Thyroid gland (tissue), 4 donors: ENCODE measurements at regions of chr1 and their contacts with region 1.

Region 1: GRCh38 chr1:78114034-78114956 is 68.5 kb downstream of the GIPC2 start:
- DNase-seq: peak; percentile 61 to 82
- H3K4me3 ChIP-seq: no peak overlapping the region
- H3K27ac ChIP-seq: peak overlapping the region; percentile 34 to 63 (median 36)
- H3K4me1 ChIP-seq: peaks cover 0 to 14% of the 10 kb centered on the region in 2 donors
- H3K27me3 ChIP-seq: no peaks in the 10 kb centered on the region
- CTCF ChIP-seq: peak; percentile 63 to 98 (median 83)
- POLR2A ChIP-seq: no peak

Region 2: DNA sequence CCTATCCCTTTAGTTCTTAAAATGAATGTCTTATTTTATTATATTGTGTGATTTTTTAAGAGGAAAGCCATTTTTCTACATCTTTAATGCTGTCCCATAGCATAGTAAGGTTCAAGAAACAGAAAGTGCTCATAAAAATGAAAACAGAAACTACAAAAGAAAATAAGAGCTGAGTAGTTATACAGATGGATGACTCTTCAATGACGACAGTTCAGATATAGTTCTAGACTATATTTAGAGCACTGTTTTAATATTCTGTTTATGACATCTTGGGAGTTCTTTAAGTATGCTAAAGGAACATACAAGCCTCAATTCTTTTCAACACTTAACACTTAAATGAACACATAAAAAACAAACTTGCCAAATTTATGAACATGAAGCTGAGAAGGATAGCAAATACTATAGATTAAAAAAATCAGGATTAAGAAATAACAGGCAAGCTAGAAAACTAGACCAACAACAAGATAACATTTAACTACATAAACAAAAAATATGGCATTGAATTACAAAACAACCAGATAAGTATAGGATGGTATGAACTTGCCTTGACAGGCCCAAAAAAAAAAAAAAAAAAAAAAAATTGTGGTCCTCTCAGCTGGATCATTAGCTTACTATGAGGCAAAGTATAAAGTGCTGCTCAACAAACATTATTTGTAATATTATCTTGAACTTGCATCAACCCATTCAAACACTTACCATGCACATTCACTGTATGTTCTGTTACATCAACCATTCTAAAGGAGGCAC is 519.8 kb before region 1 on chr1:
- intact Hi-C with region 1: no loop called
- DNase-seq: no peak
- H3K4me3 ChIP-seq: no peak overlapping the region
- H3K27ac ChIP-seq: peak overlapping the region in 1 of 3 donors; percentile 6
- H3K4me1 ChIP-seq: peaks cover 0 to 4% of the 10 kb centered on the region in 2 donors
- H3K27me3 ChIP-seq: no peaks in the 10 kb centered on the region
- CTCF ChIP-seq: no peak
- POLR2A ChIP-seq: no peak

Region 3: GRCh38 chr1:77950873-77951272 is 163.4 kb before region 1 on chr1:
- intact Hi-C with region 1: loop called (anchors 10 kb)
- DNase-seq: no peak
- H3K4me3 ChIP-seq: no peak overlapping the region
- H3K27ac ChIP-seq: no peak overlapping the region
- H3K4me1 ChIP-seq: peaks cover 3 to 6% of the 10 kb centered on the region in 2 donors
- H3K27me3 ChIP-seq: no peaks in the 10 kb centered on the region
- CTCF ChIP-seq: no peak
- POLR2A ChIP-seq: no peak

Region 4: DNA sequence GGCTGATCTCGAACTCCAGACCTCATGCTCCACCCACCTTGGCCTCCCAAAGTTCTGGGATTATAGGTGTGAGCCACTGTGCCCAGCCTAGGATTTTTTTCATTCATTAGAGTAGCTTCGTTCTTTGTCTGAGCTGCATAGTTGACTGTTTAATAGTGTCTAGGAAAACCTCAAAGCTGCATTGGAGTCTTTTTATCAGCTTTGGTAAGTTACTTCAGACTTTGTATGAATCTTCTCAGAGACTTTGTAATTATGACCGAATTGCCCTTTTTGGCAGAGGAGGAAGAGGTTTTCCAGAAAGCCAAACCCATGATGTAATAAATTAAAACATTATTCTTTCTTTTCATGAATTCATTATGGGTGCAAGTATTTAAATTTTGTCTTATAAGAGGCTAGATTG is 104.5 kb before region 1 on chr1:
- intact Hi-C with region 1: loop called (anchors 10 kb)
- DNase-seq: no peak
- H3K4me3 ChIP-seq: no peak overlapping the region
- H3K27ac ChIP-seq: no peak overlapping the region
- H3K4me1 ChIP-seq: peaks cover 12 to 28% of the 10 kb centered on the region in 2 donors
- H3K27me3 ChIP-seq: no peaks in the 10 kb centered on the region
- CTCF ChIP-seq: no peak
- POLR2A ChIP-seq: no peak